ENCODE measurements at regions of chr5 and their contacts with region 1.

Region 1: GRCh38 chr5:40679155-40679913 is 381 bp upstream of the PTGER4 start:
- DNase-seq: peak; percentile 79
- ATAC-seq: peak; percentile 74
- H3K4me3 Mint-ChIP-seq: peak overlapping the region; percentile 98
- H3K27ac Mint-ChIP-seq: peak overlapping the region; percentile 92
- H3K4me1 Mint-ChIP-seq: peaks cover 48% of the 10 kb centered on the region
- H3K27me3 Mint-ChIP-seq: no peaks in the 10 kb centered on the region
- CTCF ChIP-seq: no peak

Region 2: GRCh38 chr5:39948867-39949468 is 730.4 kb before region 1 on chr5:
- CTCF ChIA-PET with region 1: interaction called, 26 read pairs
- POLR2A ChIA-PET with region 1: interaction called, 3 read pairs
- intact Hi-C with region 1: no loop called
- DNase-seq: no peak
- ATAC-seq: peak; percentile 83
- H3K4me3 Mint-ChIP-seq: no peak overlapping the region
- H3K27ac Mint-ChIP-seq: no peak overlapping the region
- H3K4me1 Mint-ChIP-seq: peaks cover 3% of the 10 kb centered on the region
- H3K27me3 Mint-ChIP-seq: no peaks in the 10 kb centered on the region
- CTCF ChIP-seq: no peak

Region 3: GRCh38 chr5:40277161-40277906 is 402.0 kb before region 1 on chr5:
- CTCF ChIA-PET with region 1: no interaction called
- POLR2A ChIA-PET with region 1: no interaction called
- intact Hi-C with region 1: loop called (anchors 2 kb)
- DNase-seq: no peak
- ATAC-seq: peak; percentile 90
- H3K4me3 Mint-ChIP-seq: peak overlapping the region; percentile 30
- H3K27ac Mint-ChIP-seq: peak overlapping the region; percentile 77
- H3K4me1 Mint-ChIP-seq: peaks cover 30% of the 10 kb centered on the region
- H3K27me3 Mint-ChIP-seq: no peaks in the 10 kb centered on the region
- CTCF ChIP-seq: no peak

Region 4: DNA sequence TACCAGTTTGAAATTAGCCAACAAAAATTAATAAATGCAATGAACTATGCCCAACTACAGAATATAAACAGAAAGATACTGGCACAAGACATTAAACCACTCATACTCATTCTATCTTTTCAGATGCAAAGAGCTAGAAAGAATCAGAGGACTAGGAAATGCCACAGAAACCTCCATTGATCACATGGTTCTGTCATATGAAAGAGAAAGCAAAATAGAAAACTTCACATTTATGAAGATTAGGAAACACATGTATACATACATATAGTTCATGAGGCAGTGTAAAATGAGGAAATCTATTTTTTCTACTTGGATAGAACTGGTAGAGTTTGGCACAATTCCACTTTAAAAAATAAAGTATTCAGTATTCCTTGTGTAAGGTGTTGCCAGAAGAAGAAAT is 274.7 kb before region 1 on chr5:
- CTCF ChIA-PET with region 1: no interaction called
- POLR2A ChIA-PET with region 1: interaction called, 4 read pairs
- intact Hi-C with region 1: loop called (anchors 1 kb)
- DNase-seq: no peak
- ATAC-seq: peak; percentile 32
- H3K4me3 Mint-ChIP-seq: peak overlapping the region; percentile 21
- H3K27ac Mint-ChIP-seq: peak overlapping the region; percentile 38
- H3K4me1 Mint-ChIP-seq: peaks cover 56% of the 10 kb centered on the region
- H3K27me3 Mint-ChIP-seq: no peaks in the 10 kb centered on the region
- CTCF ChIP-seq: no peak

Region 5: DNA sequence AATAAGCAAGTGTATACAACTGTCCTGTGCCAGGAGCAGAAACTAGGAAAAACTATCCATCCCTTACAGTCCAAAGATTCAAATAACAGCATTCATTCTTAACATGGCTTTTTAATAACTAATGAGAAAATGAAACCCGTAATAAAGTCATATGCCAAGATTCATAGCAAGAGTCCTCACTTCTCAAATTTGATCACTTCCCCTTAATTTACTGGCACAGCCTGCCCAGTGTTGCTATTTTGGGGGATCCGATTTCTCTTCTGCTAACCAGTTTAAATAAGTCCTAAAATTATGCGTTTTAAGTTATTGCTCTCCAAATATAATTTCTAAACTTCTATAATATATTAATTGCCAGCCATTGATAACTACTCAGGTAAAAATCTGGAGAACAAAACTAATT is 176.6 kb before region 1 on chr5:
- CTCF ChIA-PET with region 1: no interaction called
- POLR2A ChIA-PET with region 1: interaction called, 4 read pairs
- intact Hi-C with region 1: loop called (anchors 1 kb)
- DNase-seq: no peak
- ATAC-seq: peak; percentile 84
- H3K4me3 Mint-ChIP-seq: no peak overlapping the region
- H3K27ac Mint-ChIP-seq: no peak overlapping the region
- H3K4me1 Mint-ChIP-seq: peaks cover 9% of the 10 kb centered on the region
- H3K27me3 Mint-ChIP-seq: no peaks in the 10 kb centered on the region
- CTCF ChIP-seq: no peak

Region 6: GRCh38 chr5:40615586-40616170 is 63.7 kb before region 1 on chr5:
- CTCF ChIA-PET with region 1: no interaction called
- POLR2A ChIA-PET with region 1: interaction called, 3 read pairs
- intact Hi-C with region 1: loop called (anchors 2 kb)
- DNase-seq: no peak
- ATAC-seq: peak; percentile 52
- H3K4me3 Mint-ChIP-seq: no peak overlapping the region
- H3K27ac Mint-ChIP-seq: peak overlapping the region; percentile 54
- H3K4me1 Mint-ChIP-seq: peaks cover 19% of the 10 kb centered on the region
- H3K27me3 Mint-ChIP-seq: no peaks in the 10 kb centered on the region
- CTCF ChIP-seq: no peak

Region 7: DNA sequence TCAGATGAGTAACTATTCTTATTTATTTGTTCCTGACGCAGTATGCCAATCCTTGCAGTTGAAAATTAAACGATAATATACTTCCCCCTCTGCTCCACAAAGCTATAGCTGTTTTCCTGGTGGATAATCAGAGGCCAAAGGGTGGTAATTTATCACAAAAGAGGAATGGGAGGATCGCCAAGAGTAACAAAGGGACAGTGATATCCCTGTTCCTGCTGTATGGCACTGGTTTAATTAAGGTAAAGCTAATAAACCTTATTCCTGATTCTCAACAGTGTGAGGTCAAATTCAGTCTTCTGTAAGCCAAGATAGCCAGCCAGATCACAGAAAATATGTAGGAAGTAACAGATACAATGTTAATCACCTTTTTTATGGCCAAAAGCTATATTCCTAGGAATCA is 33.0 kb before region 1 on chr5:
- CTCF ChIA-PET with region 1: no interaction called
- POLR2A ChIA-PET with region 1: no interaction called
- intact Hi-C with region 1: no loop called
- DNase-seq: no peak
- ATAC-seq: no peak
- H3K4me3 Mint-ChIP-seq: no peak overlapping the region
- H3K27ac Mint-ChIP-seq: no peak overlapping the region
- H3K4me1 Mint-ChIP-seq: peaks cover 8% of the 10 kb centered on the region
- H3K27me3 Mint-ChIP-seq: no peaks in the 10 kb centered on the region
- CTCF ChIP-seq: no peak

Region 8: GRCh38 chr5:40716000-40716399 is 36.7 kb after region 1 on chr5:
- CTCF ChIA-PET with region 1: no interaction called
- POLR2A ChIA-PET with region 1: no interaction called
- intact Hi-C with region 1: no loop called
- DNase-seq: no peak
- ATAC-seq: no peak
- H3K4me3 Mint-ChIP-seq: no peak overlapping the region
- H3K27ac Mint-ChIP-seq: no peak overlapping the region
- H3K4me1 Mint-ChIP-seq: peaks cover 5% of the 10 kb centered on the region
- H3K27me3 Mint-ChIP-seq: no peaks in the 10 kb centered on the region
- CTCF ChIP-seq: no peak

Region 9: GRCh38 chr5:40798012-40798855 is 118.9 kb after region 1 on chr5 and contains the start of gene PRKAA1:
- CTCF ChIA-PET with region 1: no interaction called
- POLR2A ChIA-PET with region 1: interaction called, 5 read pairs
- intact Hi-C with region 1: loop called (anchors 2 kb)
- DNase-seq: peak; percentile 93
- ATAC-seq: peak; percentile 96
- H3K4me3 Mint-ChIP-seq: peak within 1 kb of the TSS; percentile 91
- H3K27ac Mint-ChIP-seq: peak within 1 kb of the TSS; percentile 93
- H3K4me1 Mint-ChIP-seq: peaks cover 41% of the 10 kb centered on the region
- H3K27me3 Mint-ChIP-seq: no peaks in the 10 kb centered on the region
- CTCF ChIP-seq: no peak
- total RNA-seq, gene PRKAA1: 61.9 and 69.4 TPM in 2 replicates

Measured in activated B cell treated with CpG ODN at 0.5 μM for 24 hours (primary cell).